ENCODE measurements at regions of chr14 and their contacts with region 1.

Region 1: DNA sequence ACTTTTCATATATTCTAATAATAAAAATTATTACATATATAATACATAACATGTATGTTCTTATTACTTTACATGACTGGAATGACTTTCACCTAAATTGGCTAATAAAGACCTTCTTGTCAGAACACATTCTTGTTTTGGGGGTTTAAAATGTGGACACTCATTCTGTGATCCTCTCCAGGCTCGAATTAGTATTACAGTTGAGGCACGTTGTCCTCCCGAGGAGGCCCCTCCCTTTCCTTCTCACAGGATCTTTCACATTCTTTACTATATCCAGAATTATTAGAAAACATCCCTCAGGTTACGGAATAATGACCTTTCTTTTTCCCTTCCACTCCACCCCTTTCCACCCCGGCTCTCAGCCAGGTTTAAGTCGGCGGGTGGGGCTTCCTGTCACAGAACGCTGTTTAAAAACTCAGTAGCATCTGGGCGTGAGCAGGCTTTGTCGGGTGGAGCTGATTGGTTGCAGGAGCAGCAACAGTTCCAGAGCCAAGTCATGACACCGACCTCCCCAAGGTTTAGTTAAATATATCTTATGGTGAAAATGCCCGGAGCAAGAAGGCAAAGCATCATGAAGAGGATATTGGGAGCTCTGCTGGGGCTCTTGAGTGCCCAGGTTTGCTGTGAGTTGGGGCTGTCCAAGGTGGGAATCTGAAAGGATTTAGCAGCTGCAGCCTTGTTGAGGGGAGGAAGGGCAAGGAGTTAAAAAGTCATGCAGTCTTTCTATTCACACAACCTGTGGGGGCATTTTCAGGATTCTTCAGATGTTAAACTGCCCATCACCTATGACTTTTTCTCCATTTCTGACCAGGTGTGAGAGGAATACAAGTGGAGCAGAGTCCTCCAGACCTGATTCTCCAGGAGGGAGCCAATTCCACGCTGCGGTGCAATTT is 396.7 kb upstream of the OR4E1 start:
- DNase-seq: peak; percentile 50 to 74 (median 57)
- H3K4me3 ChIP-seq: peak overlapping the region; percentile 55 to 69
- H3K4me3 Mint-ChIP-seq: peak overlapping the region; percentile 89 to 96 (median 92)
- H3K27ac ChIP-seq: peak overlapping the region; percentile 38
- H3K27ac Mint-ChIP-seq: peak overlapping the region; percentile 90 to 96 (median 93)
- H3K4me1 ChIP-seq: peaks cover 39% of the 10 kb centered on the region
- H3K4me1 Mint-ChIP-seq: peaks cover 17 to 45% (median 24%) of the 10 kb centered on the region in 4 donors
- H3K27me3 ChIP-seq: no peaks in the 10 kb centered on the region
- H3K27me3 Mint-ChIP-seq: no peaks in the 10 kb centered on the region

Region 2: GRCh38 chr14:20413045-20413799 is 1657.1 kb before region 1 on chr14 and contains the start of gene TEP1:
- CTCF ChIA-PET with region 1: no interaction called
- POLR2A ChIA-PET with region 1: no interaction called
- intact Hi-C with region 1: no loop called
- DNase-seq: peak; percentile 56 to 75 (median 65)
- H3K4me3 ChIP-seq: peak within 1 kb of the TSS; percentile 73 to 79
- H3K4me3 Mint-ChIP-seq: peak within 1 kb of the TSS; percentile 92 to 100 (median 99)
- H3K27ac ChIP-seq: peak within 1 kb of the TSS; percentile 85
- H3K27ac Mint-ChIP-seq: peak within 1 kb of the TSS; percentile 91 to 99 (median 96)
- H3K4me1 ChIP-seq: peaks cover 38% of the 10 kb centered on the region
- H3K4me1 Mint-ChIP-seq: peaks cover 32 to 52% (median 41%) of the 10 kb centered on the region in 4 donors
- H3K27me3 ChIP-seq: no peaks in the 10 kb centered on the region
- H3K27me3 Mint-ChIP-seq: no peaks in the 10 kb centered on the region
- total RNA-seq, gene TEP1: 66.7 to 67.3 TPM

Region 3: DNA sequence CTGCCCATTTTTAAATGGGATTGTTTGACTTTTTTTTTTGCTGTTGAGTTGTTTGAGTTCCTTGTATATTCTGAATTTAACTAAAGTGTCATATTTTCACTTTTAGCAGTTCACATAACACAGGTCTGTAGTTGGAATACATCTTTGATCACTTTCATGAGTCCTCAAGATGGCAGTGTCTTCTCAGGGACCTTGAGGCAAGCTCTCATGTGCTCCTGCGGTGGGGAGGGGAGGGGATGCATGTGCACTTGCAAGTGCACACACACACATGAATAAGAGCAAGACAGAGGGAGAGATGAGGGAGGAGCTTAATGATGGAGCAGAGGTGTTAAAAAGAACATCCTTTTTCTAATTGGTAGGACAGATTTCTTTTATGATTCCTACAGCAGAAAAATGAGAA is 105.3 kb before region 1 on chr14:
- CTCF ChIA-PET with region 1: no interaction called
- POLR2A ChIA-PET with region 1: no interaction called
- intact Hi-C with region 1: no loop called
- DNase-seq: peak; percentile 34 to 74 (median 58)
- H3K4me3 ChIP-seq: no peak overlapping the region
- H3K4me3 Mint-ChIP-seq: peak overlapping the region; percentile 36 to 73 (median 66)
- H3K27ac ChIP-seq: no peak overlapping the region
- H3K27ac Mint-ChIP-seq: peak overlapping the region; percentile 23 to 93 (median 65)
- H3K4me1 ChIP-seq: peaks cover 21% of the 10 kb centered on the region
- H3K4me1 Mint-ChIP-seq: peaks cover 8 to 23% (median 13%) of the 10 kb centered on the region in 4 donors
- H3K27me3 ChIP-seq: no peaks in the 10 kb centered on the region
- H3K27me3 Mint-ChIP-seq: peaks cover 0 to 3% of the 10 kb centered on the region in 2 donors

Region 4: GRCh38 chr14:22052795-22053194 is 17.6 kb before region 1 on chr14:
- CTCF ChIA-PET with region 1: interaction called, 6 read pairs
- POLR2A ChIA-PET with region 1: interaction called, 27 read pairs
- intact Hi-C with region 1: loop called (anchors 1 kb)
- DNase-seq: peak in 1 of 5 donors; percentile 39
- H3K4me3 ChIP-seq: peak overlapping the region in 1 of 2 donors; percentile 14
- H3K4me3 Mint-ChIP-seq: peak overlapping the region in 7 of 8 donors; percentile 61 to 91 (median 84)
- H3K27ac ChIP-seq: peak overlapping the region; percentile 43
- H3K27ac Mint-ChIP-seq: peak overlapping the region in 4 of 7 donors; percentile 15 to 99 (median 32)
- H3K4me1 ChIP-seq: peaks cover 13% of the 10 kb centered on the region
- H3K4me1 Mint-ChIP-seq: peaks cover 9 to 39% (median 17%) of the 10 kb centered on the region in 4 donors
- H3K27me3 ChIP-seq: no peaks in the 10 kb centered on the region
- H3K27me3 Mint-ChIP-seq: peaks cover 0 to 2% of the 10 kb centered on the region in 2 donors

Region 5: DNA sequence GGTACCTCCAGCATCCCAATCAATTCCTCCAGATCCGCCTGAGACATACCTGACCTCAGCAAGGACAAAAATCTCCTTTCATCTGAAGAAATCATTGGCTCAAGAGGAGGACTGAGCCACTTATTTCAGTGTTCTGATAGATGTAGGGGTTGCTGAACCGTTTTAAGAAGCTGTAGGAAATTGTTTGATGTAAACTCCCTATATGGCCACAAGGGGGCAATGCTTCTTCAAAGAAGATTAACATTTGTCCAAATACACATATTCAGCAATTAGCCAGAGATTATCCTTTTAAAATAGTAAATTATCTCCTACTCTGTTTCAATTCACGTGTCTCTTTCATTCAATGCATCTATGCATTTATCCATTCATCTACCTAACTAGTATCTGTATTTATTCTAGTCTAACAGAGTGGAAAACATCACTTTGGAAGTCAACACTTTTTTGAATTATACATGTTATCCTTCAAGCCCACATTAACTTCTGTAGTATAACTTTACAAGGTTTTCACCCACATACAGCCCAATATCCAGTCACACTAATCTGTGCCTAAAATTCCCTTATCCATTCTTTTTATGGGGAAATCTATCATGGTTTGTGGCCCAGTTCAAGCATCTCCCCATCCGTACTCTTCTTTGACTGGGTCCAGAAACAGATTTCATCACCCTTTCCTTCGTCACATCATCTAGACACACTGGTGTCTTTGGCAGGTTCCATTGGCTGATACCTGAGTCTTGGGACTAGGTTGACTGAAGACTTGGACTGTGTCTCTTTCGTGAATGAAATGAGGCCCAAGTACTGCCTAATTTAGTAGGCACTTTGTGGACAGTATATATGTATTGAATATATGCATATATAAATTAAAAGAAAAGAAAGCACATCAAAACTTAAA is 14.3 kb after region 1 on chr14:
- CTCF ChIA-PET with region 1: interaction called, 4 read pairs
- POLR2A ChIA-PET with region 1: interaction called, 3 read pairs
- intact Hi-C with region 1: loop called (anchors 2 kb)
- DNase-seq: peak in 4 of 5 donors; percentile 44 to 52 (median 48)
- H3K4me3 ChIP-seq: no peak overlapping the region
- H3K4me3 Mint-ChIP-seq: peak overlapping the region in 6 of 8 donors; percentile 37 to 70 (median 61)
- H3K27ac ChIP-seq: no peak overlapping the region
- H3K27ac Mint-ChIP-seq: peak overlapping the region in 5 of 7 donors; percentile 15 to 73 (median 41)
- H3K4me1 ChIP-seq: no peaks in the 10 kb centered on the region
- H3K4me1 Mint-ChIP-seq: peaks cover 13 to 21% (median 16%) of the 10 kb centered on the region in 4 donors
- H3K27me3 ChIP-seq: no peaks in the 10 kb centered on the region
- H3K27me3 Mint-ChIP-seq: peaks cover 0 to 1% of the 10 kb centered on the region in 2 donors

Region 6: GRCh38 chr14:22140633-22141032 is 70.3 kb after region 1 on chr14:
- CTCF ChIA-PET with region 1: no interaction called
- POLR2A ChIA-PET with region 1: no interaction called
- intact Hi-C with region 1: no loop called
- DNase-seq: no peak
- H3K4me3 ChIP-seq: no peak overlapping the region
- H3K4me3 Mint-ChIP-seq: no peak overlapping the region
- H3K27ac ChIP-seq: no peak overlapping the region
- H3K27ac Mint-ChIP-seq: no peak overlapping the region
- H3K4me1 ChIP-seq: no peaks in the 10 kb centered on the region
- H3K4me1 Mint-ChIP-seq: no peaks in the 10 kb centered on the region
- H3K27me3 ChIP-seq: no peaks in the 10 kb centered on the region
- H3K27me3 Mint-ChIP-seq: no peaks in the 10 kb centered on the region

Region 7: DNA sequence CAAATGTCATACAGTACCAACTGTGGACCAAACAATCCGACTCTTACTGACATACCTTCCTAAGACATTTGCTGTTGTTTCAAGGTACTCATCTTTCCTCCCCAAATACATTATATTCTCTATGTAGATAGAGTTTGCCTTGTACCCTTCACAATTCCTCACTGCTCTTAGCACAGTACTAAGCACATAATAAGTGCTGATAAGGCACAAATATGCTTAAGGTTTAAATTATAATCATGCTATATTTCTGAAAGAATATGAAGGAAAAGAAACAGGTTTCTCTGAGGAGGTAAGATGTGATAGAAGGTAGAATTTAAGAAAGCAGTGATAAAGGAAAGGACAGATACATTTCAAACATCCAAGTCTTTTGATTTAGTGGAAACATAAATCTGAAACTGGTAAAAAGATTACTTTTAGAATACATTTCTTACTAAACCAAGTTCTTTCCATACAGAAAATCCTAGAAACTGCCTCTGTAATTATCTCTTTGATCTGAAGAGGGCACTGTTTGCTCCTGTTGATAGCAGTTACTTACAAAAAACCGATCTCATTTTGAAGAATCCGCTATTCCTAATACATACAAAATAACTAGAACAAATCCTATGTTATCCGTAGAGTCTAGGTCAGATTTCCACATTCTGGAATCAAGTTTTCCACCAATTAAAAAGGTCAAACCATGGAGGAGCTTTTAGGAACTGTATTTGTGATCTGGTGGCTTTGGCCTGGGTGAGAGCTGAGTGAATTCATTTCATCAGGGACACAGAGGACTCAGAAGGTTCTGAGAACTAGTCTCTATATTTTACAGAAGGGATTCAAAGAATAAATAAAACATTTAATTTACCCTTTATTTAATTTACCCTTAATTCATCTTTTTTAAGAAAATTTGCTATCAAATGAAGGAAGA is 206.8 kb after region 1 on chr14:
- CTCF ChIA-PET with region 1: no interaction called
- POLR2A ChIA-PET with region 1: no interaction called
- intact Hi-C with region 1: no loop called
- DNase-seq: no peak
- H3K4me3 ChIP-seq: no peak overlapping the region
- H3K4me3 Mint-ChIP-seq: peak overlapping the region in 1 of 8 donors; percentile 16
- H3K27ac ChIP-seq: no peak overlapping the region
- H3K27ac Mint-ChIP-seq: no peak overlapping the region
- H3K4me1 ChIP-seq: no peaks in the 10 kb centered on the region
- H3K4me1 Mint-ChIP-seq: no peaks in the 10 kb centered on the region
- H3K27me3 ChIP-seq: no peaks in the 10 kb centered on the region
- H3K27me3 Mint-ChIP-seq: no peaks in the 10 kb centered on the region

Measured in CD4-positive, alpha-beta memory T cell (primary cell).